ENCODE measurements at regions of chr9 and their contacts with region 1.

Region 1: DNA sequence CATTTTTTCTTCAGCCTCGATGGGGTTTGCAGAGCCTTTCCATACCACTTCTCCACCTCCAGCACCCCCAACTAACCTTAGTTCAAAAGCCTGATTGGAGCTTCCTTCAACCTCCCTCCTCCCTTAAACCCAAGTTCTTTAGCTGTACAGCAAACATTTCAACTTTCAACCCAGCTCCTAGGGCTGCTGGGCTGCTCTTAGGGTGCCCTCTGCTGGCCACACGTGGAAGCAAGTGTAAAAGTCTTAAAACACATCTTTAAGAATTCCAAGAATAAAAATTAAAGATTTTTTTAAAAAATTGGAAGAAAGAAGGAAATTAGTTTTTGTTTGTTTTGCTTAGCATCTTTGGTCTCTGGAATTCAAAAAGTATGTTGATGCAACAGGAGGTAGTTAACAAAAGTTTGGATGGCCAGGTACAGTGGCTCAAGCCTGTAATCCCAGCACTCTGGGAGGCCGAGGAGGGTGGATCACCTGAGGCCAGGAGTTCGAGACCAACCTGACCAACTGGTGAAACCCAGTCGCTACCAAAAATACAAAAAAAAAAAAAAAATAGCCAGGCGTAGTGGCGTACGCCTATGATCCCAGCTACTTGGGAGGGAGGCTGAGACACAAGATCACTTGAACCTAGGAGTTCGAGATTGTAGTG is 15.5 kb upstream of the HSD17B3 start:
- DNase-seq: peak; percentile 51
- H3K4me3 Mint-ChIP-seq: no peak overlapping the region
- H3K27ac Mint-ChIP-seq: no peak overlapping the region
- H3K4me1 Mint-ChIP-seq: no peaks in the 10 kb centered on the region
- H3K27me3 Mint-ChIP-seq: peaks cover 2% of the 10 kb centered on the region

Region 2: GRCh38 chr9:96299823-96300222 is 17.6 kb before region 1 on chr9:
- CTCF ChIA-PET with region 1: no interaction called
- POLR2A ChIA-PET with region 1: no interaction called
- DNase-seq: no peak
- H3K4me3 Mint-ChIP-seq: no peak overlapping the region
- H3K27ac Mint-ChIP-seq: no peak overlapping the region
- H3K4me1 Mint-ChIP-seq: no peaks in the 10 kb centered on the region
- H3K27me3 Mint-ChIP-seq: peaks cover 4% of the 10 kb centered on the region

Region 3: GRCh38 chr9:96327694-96328352 is 10.4 kb after region 1 on chr9:
- CTCF ChIA-PET with region 1: interaction called, 10 read pairs
- POLR2A ChIA-PET with region 1: no interaction called
- DNase-seq: peak; percentile 63
- H3K4me3 Mint-ChIP-seq: no peak overlapping the region
- H3K27ac Mint-ChIP-seq: no peak overlapping the region
- H3K4me1 Mint-ChIP-seq: no peaks in the 10 kb centered on the region
- H3K27me3 Mint-ChIP-seq: no peaks in the 10 kb centered on the region

Measured in activated CD4-positive, alpha-beta T cell treated with anti-CD3 and anti-CD28 coated beads, Interleukin-2, amount 10 ng/mL, durations not matched to agents 7 days and 5 days (primary cell).